Posterior cingulate gyrus (tissue), 11 donors: ENCODE measurements at regions of chr21 and their contacts with region 1.

Region 1: GRCh38 chr21:43810505-43811261 is 21.3 kb downstream of the RRP1 start:
- DNase-seq: peak; percentile 64 to 97 (median 88)

Region 2: GRCh38 chr21:43728467-43729390 is 82.0 kb before region 1 on chr21:
- intact Hi-C with region 1: no loop called
- DNase-seq: peak; percentile 85 to 99 (median 93)

Region 3: GRCh38 chr21:43938751-43939442 is 128.2 kb after region 1 on chr21:
- intact Hi-C with region 1: loop called (anchors 1 kb)
- DNase-seq: peak in 8 of 10 donors; percentile 57 to 96 (median 74)

Region 4: GRCh38 chr21:43975495-43975993 is 164.9 kb after region 1 on chr21:
- intact Hi-C with region 1: loop called (anchors 1 kb)
- DNase-seq: peak; percentile 75 to 97 (median 86)

Region 5: DNA sequence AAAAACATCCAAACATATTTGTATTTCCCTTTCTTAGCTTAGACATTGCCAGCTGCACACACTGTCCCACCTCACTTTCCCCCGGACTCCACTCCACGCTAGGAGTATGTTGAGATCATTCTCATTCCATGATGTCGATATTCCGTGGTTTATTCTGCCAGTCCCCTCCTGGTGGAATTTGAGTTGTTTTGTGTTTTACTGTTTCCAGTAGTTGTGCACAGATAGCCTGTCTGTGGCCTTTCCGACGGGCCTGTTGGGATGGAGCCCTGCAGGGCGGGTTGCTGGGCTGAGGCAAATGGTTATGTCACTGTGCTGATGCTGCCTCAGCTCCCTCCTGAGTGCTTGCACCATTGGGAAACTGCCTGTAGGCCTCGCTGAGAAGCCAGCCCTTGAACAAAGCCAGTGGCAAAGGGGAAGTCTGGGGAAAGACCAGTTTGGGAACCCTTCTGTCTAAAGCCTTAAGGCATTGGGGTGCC is 214.2 kb after region 1 on chr21:
- intact Hi-C with region 1: no loop called
- DNase-seq: peak in 7 of 10 donors; percentile 27 to 92 (median 43)

Region 6: DNA sequence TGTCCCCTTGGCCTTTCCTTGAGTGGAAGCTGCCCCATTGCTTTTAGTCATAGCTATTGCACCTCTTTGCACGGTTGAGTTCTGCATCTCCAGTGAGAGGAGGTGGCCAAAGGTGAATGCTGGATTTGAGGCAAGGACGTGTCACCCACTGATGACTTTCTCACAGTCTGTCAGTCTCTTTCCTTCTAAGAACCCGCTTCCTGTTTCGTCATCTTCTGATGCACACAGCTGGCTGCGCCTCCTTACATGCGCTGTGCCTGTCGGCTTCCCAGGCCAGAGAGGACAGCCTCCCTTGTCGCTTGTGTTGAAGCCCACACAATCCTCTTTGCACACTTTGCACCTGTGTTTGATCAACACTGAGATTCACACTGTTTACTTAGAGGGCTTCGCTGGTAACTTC is 254.7 kb after region 1 on chr21:
- intact Hi-C with region 1: loop called (anchors 5 kb)
- DNase-seq: peak in 1 of 10 donors; percentile 62